ENCODE measurements at regions of chr11 and their contacts with region 1.

Region 1: DNA sequence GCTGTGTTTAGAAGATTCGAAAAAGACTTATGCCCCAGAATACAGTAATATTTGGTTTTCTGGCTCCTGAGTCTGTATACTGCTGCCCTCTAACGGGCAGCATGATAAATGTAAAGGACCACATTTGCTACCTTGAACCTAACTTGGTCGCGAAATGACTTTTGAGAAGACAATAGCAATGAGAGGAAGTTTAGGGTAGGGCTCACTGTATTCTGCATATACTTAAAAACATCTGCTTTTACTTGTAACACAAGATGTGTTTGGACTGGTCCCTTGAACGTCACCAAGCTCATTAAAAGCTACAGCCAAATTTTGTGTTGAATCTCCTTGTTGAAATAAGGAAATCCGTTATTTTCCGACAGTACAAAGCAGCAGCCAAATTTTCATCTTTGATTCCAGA is 309.1 kb downstream of the SWAP70 start:
- DNase-seq: peak; percentile 76
- CTCF ChIP-seq: peak; percentile 83

Region 2: GRCh38 chr11:9534791-9535781 is 437.9 kb before region 1 on chr11:
- in situ Hi-C with region 1: loop called (anchors 25 kb)
- DNase-seq: peak; percentile 72
- CTCF ChIP-seq: peak; percentile 84

Region 3: DNA sequence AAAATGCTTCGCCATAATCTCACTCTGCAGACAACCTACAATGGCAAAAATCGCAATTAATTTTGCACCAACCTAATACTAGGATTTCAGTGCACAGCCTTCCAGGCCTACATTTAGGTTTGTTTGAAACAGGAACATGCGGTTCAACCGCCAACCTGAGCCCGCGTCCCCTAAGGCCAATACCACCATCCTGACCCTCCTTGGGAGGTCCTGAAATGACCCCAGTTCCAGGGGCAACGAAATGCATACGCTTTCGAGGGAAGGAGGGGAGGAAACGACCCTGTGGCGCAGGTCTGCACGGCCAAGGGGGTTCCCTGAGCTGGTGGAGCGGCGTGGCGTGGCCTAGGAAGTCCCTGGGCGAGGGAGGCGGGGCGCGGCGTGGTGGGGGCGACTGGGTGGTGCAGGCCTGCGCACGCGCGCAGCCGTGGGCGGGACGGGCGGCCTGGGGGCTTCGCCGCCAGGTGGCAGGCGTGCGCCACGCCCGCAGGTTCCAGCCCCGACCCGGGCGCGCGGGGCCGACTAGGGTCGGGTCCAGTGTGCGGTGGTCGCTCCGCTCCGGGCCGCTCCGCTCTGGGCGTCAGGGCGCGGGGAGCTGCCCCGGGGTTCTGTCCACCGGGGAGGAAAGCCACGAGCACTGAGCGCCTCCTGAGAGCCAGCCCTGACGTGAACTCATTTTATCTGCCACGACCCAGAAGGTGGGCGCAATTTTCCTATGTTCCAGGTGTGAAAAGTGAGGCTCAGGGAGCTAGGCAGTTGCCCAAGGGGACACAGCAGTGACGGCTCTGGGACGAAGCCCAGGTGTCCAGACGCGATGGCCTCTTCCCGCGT is 215.0 kb before region 1 on chr11:
- in situ Hi-C with region 1: loop called (anchors 10 kb)
- DNase-seq: peak; percentile 98
- CTCF ChIP-seq: peak; percentile 94

Region 4: GRCh38 chr11:9825315-9825714 is 147.7 kb before region 1 on chr11:
- in situ Hi-C with region 1: no loop called
- DNase-seq: no peak
- CTCF ChIP-seq: no peak

Region 5: DNA sequence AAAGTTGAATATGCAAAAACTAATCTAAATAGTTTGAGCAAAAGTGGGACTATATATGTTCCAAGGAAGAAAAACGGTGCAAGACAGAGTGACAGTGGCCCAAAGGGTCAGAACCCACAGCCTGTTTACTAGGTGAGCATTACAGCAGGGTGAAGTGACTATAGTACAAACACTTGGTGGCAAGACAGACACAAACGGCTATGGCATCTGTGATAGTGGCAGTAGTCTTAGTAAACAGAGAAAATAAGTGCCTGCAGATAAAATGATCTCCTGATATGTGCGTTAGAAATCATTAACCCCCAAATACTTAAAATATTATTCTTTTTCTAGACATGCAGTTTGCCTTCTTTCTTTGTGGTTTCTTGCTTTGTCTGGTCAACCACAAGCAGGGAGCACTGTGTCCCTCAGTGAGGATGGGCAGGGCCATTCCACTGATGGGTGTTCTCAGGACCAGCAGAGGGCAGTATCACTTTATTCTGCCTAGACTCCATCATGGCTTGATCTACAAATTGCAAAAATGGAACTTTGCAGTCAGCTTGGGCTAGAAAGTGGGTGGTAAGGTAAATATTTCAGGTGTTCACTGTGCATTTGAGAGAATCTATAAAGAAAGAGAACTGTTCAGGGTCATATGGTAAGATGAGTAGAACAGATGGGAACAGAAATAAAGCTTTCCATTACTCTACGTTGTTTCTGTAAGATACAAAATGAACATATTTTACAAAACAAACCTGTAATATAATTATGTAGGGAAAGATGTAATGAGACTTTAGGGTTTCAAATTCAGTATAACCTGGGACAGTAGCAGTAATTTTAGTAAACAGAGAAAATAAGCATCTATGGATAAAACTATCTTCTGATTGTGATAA is 110.9 kb before region 1 on chr11:
- in situ Hi-C with region 1: loop called (anchors 5 kb)
- DNase-seq: peak; percentile 59
- CTCF ChIP-seq: peak; percentile 87

Measured in GM13977 (cell line).